ENCODE measurements at regions of chr20 and their contacts with region 1.

Region 1: DNA sequence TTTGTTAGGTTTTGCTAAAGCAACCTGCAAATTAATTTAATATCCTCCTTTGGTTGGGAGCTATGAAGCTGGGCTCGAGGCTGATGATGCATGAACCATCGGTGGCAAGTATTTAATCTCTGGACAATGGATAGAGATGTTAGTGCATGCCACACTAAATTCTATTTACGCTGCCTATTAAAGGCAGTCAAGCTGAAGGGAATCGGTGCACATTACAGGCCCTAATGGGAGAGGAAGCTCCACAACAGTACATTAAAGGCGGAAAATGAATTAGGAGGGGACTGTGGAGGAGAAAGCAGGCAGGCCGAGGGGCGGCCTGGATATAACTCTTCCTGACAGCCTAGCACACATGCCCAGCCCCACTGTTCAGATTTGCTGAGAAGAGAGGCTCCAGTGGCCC is 132.4 kb upstream of the MAFB start:
- DNase-seq: no peak
- H3K4me3 ChIP-seq: no peak overlapping the region
- H3K27ac ChIP-seq: no peak overlapping the region
- H3K4me1 ChIP-seq: no peaks in the 10 kb centered on the region
- H3K27me3 ChIP-seq: no peaks in the 10 kb centered on the region
- CTCF ChIP-seq: no peak
- POLR2A ChIP-seq: no peak

Region 2: DNA sequence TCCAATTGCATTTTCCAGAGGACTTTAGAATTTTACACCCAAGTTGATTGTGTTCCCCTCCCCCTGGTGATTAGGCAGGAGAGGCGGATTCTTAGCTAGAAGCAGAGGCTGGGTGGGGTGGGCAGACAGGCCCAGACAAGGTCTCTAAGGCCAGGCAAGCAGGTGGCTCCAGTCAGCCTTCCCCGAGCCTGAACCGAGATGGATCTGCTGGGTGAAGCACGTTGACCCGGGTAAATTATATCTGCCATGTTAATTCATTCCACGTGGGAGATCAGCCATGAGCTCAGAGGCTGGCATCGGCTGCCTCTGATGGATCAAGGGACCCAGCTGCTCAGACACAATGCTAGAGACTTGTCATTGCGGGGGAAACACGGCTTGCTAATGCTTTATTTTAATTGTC is 27.1 kb after region 1 on chr20:
- intact Hi-C with region 1: loop called (anchors 1 kb)
- DNase-seq: no peak
- H3K4me3 ChIP-seq: no peak overlapping the region
- H3K27ac ChIP-seq: no peak overlapping the region
- H3K4me1 ChIP-seq: no peaks in the 10 kb centered on the region
- H3K27me3 ChIP-seq: no peaks in the 10 kb centered on the region
- CTCF ChIP-seq: no peak
- POLR2A ChIP-seq: no peak